Left cardiac atrium (tissue), 4 donors: ENCODE measurements at regions of chr3 and their contacts with region 1.

Region 1: GRCh38 chr3:52108302-52109232 is 45.7 kb downstream of the POC1A start:
- DNase-seq: peak; percentile 53
- ATAC-seq: peak; percentile 81 to 82

Region 2: DNA sequence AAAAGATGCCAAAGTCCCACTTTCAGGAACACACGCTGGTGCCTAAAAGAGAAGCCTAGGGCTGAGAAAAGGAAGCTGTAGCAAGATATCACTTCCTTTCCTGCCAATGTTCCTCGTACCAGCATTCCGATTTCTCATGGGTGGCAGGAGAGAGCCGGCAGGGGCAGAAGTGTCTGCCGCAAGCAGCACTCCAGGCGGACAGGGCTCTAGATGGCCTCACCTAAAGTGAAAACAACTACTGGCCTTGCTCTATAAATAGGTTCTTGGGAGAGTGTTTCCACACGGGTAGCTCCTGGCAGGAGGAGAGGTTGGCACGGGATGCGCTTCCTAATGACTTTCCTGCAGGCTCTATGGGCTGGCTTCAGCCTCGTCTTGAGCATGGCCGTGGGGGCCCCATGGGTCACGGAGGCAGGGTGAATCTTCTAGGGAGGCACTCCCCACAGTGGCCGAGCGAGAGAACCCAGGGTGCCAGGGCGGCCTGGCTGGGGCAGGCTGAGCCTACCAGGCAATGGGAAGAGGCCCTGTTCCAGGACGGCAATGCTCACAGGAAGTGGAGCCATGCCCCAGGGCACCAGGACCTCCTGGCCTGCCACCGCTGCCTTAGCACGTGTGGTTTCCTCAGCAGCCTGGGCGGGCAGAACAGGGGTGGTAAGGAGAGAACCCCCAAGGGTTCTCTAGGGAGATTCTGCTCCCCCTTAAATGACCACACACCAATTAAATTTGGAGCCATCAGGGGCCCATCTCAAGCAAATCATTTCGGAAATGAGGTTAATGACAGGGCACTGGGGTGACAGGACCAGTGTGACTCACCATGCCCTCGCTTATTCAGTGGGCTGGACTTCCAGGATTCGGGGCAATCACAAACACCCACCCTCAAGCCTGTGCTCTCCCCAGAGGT is 37.6 kb before region 1 on chr3:
- intact Hi-C with region 1: loop called in 1 of 2 experiments (anchors 5 kb)
- DNase-seq: peak; percentile 67
- ATAC-seq: peak; percentile 69 to 73